ENCODE measurements at regions of chr16 and their contacts with region 1.

Region 1: DNA sequence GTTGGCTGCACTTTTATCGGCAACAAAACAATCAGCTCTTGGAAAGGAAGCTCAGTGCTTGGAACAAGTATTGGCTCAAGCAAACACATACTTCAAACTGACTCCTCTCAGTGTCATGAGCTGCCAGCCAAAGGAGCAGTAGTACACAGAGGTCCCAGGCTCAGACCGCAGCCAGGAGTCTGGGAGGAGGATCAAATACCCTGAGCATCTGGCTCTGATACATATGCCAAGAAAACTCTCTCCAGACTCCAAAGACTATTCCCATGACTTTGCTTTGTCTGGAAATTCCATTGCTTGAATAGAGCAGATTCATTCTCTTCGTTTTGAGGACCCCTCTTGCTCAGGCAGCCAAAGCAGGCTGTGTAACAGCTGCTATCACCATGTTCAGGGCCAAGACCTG is 501.6 kb upstream of the PSMD7 start:
- DNase-seq: no peak
- H3K4me3 ChIP-seq: no peak overlapping the region
- H3K27ac ChIP-seq: no peak overlapping the region
- H3K4me1 ChIP-seq: no peaks in the 10 kb centered on the region
- H3K27me3 ChIP-seq: no peaks in the 10 kb centered on the region
- CTCF ChIP-seq: no peak

Region 2: DNA sequence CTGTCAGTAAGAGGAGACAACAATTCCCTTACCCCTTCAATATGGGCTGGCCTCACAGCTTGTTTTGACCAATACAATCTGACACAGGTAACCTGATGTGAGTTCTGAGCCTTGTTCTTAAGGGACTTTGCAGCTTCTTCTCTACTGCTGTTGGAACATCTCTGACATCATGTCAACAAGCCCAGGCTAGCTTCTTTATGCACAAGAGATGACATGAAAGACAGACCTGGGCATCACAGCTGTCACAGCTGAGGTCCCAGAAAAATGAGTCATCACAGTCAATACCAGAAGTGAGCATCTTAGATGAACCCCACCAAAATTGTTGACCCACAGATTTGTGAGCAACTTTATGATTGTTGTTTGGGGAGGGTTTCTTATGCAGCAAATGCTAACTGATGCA is 69.9 kb after region 1 on chr16:
- CTCF ChIA-PET with region 1: no interaction called
- dilution Hi-C with region 1: loop called (anchors 5 kb)
- in situ Hi-C with region 1: no loop called
- intact Hi-C with region 1: no loop called
- DNase-seq: peak; percentile 9
- H3K4me3 ChIP-seq: no peak overlapping the region
- H3K27ac ChIP-seq: no peak overlapping the region
- H3K4me1 ChIP-seq: no peaks in the 10 kb centered on the region
- H3K27me3 ChIP-seq: no peaks in the 10 kb centered on the region
- CTCF ChIP-seq: no peak